CD14-positive monocyte (primary cell): ENCODE measurements at regions of chr3 and their contacts with region 1.

Region 1: GRCh38 chr3:101936419-101937356 is 87.4 kb downstream of the NFKBIZ start:
- DNase-seq: peak; percentile 88 to 96 (median 95)
- H3K4me3 ChIP-seq: peak overlapping the region in 1 of 3 experiments; percentile 59
- H3K4me3 Mint-ChIP-seq: peak overlapping the region; percentile 58 to 67
- H3K27ac ChIP-seq: peak overlapping the region; percentile 84 to 90
- H3K27ac Mint-ChIP-seq: peak overlapping the region in 6 of 7 donors; percentile 97 to 99 (median 98)
- H3K4me1 ChIP-seq: peaks cover 69 to 79% of the 10 kb centered on the region in 2 donors
- H3K4me1 Mint-ChIP-seq: peaks cover 42% of the 10 kb centered on the region
- H3K27me3 ChIP-seq: no peaks in the 10 kb centered on the region
- H3K27me3 Mint-ChIP-seq: peaks cover 0 to 2% (median 1%) of the 10 kb centered on the region in 3 donors
- CTCF ChIP-seq: no peak

Region 2: DNA sequence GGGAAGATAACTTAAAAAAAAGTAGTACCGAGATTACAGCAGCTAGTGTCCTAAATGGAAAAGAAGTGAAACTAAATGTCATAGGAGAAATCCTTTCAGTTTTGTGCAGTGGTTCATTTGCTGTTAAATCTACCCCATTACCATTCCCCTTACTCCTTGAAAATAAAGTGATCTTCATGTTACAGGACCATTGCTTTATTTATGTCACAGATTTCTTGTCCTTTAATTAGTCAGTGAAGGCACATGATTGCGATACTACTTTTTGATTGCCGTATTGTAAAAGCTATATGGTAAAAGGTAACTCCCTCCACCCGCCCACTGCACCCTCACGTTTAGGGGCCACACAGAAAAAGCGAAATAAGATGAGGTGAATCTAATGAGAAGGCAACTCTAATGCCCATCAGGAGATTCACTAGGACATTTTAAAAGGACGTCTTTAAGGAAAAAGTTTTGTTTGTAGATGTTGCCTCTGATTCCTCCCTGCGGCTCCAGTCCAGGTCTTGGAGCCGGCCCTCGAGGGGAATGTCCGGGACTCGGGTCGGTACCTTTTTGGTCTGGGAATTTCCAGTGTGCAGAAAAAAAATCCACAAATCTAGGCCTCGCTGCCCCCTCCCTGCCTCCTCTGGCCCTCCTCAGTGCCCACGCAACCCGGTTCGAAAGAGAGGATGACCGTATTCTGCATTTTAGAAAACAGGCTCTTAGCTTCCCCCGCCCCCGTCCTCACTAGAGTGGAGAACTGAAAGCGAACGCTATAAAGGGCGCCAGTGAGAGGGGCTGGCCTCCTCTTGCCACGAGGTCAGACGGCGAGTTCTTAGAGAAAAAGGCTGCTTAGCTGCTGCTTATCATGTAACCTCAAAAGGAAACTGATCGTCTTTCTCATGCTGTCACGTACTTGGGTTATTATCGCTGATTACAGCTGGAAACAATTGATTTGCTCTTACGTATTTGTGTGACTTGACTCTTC is 109.2 kb before region 1 on chr3:
- intact Hi-C with region 1: loop called in 1 of 2 experiments (anchors 5 kb)
- DNase-seq: peak; percentile 76 to 95 (median 79)
- H3K4me3 ChIP-seq: peak overlapping the region; percentile 76 to 86 (median 80)
- H3K4me3 Mint-ChIP-seq: peak overlapping the region; percentile 94 to 97
- H3K27ac ChIP-seq: peak overlapping the region; percentile 90 to 94
- H3K27ac Mint-ChIP-seq: peak overlapping the region; percentile 94 to 98 (median 97)
- H3K4me1 ChIP-seq: peaks cover 30 to 45% of the 10 kb centered on the region in 2 donors
- H3K4me1 Mint-ChIP-seq: peaks cover 52% of the 10 kb centered on the region
- H3K27me3 ChIP-seq: no peaks in the 10 kb centered on the region
- H3K27me3 Mint-ChIP-seq: peaks cover 0 to 5% (median 0%) of the 10 kb centered on the region in 3 donors
- CTCF ChIP-seq: no peak

Region 3: DNA sequence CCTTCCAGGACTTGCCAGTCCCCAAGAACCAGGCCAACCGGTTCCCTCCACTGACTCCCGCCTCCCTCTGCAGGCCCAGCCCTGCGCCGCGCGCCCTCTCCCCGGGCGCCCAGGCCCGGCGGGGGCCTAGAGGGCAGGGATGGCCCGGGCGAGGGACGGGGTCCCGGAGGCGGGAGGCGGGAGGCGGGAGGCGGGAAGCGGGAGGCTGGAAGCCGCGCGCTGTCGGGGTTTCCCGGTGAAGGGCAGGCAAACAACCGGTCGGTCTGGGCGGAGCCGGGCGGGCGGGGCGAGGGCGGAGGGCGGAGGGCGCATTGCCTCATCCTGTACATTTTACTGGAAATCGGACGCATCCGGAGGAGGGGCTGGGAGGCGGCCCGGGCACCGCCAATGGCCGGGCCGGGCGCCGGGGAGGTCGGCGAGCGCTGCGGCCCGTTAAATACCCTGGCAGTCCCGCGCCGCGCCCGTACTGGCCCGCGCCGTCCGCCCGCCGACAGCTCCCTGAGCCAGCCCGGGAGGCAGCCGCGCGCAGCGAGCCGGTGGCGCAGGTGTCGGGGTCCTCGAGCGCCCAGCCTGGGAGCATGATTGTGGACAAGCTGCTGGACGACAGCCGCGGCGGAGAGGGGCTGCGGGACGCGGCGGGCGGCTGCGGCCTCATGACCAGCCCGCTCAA is 87.5 kb before region 1 on chr3 and contains the start of gene NFKBIZ:
- intact Hi-C with region 1: loop called in 1 of 2 experiments (anchors 5 kb)
- DNase-seq: peak; percentile 92 to 97 (median 95)
- H3K4me3 ChIP-seq: peak within 1 kb of the TSS; percentile 61 to 100 (median 98)
- H3K4me3 Mint-ChIP-seq: peak within 1 kb of the TSS; percentile 96
- H3K27ac ChIP-seq: peak within 1 kb of the TSS; percentile 85 to 96
- H3K27ac Mint-ChIP-seq: peak within 1 kb of the TSS; percentile 94 to 99 (median 98)
- H3K4me1 ChIP-seq: peaks cover 41 to 56% of the 10 kb centered on the region in 2 donors
- H3K4me1 Mint-ChIP-seq: peaks cover 52% of the 10 kb centered on the region
- H3K27me3 ChIP-seq: no peaks in the 10 kb centered on the region
- H3K27me3 Mint-ChIP-seq: no peaks in the 10 kb centered on the region
- CTCF ChIP-seq: no peak
- polyA plus RNA-seq, gene NFKBIZ: 71.0 to 592 (median 84.9) TPM

Region 4: DNA sequence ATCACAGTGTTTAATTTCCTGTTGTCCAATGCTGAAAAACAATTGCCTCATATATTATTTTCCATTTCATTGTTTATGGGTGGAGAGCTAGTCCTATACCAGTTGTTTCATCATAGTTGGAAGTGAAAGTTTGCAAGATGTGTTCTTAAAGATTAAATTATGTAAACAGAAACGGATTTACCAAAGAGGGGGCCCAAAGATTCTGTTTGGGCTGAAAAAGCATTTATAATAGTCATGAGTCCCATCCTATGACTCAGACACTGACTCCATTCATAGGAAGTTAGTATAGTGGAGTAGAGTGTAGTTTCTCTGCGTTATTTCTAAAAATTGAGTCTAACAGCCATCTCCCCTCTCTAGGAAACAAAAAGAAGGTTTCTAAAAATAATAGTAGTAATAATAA is 63.1 kb before region 1 on chr3:
- intact Hi-C with region 1: loop called in 1 of 2 experiments (anchors 10 kb)
- DNase-seq: peak; percentile 79 to 90 (median 88)
- H3K4me3 ChIP-seq: peak overlapping the region in 1 of 3 experiments; percentile 24
- H3K4me3 Mint-ChIP-seq: no peak overlapping the region
- H3K27ac ChIP-seq: peak overlapping the region; percentile 55 to 84
- H3K27ac Mint-ChIP-seq: peak overlapping the region; percentile 83 to 97 (median 91)
- H3K4me1 ChIP-seq: peaks cover 67 to 69% of the 10 kb centered on the region in 2 donors
- H3K4me1 Mint-ChIP-seq: peaks cover 65% of the 10 kb centered on the region
- H3K27me3 ChIP-seq: no peaks in the 10 kb centered on the region
- H3K27me3 Mint-ChIP-seq: no peaks in the 10 kb centered on the region
- CTCF ChIP-seq: no peak

Region 5: GRCh38 chr3:101879623-101880284 is 56.9 kb before region 1 on chr3:
- intact Hi-C with region 1: loop called (anchors 5 to 10 kb)
- DNase-seq: peak in 2 of 3 donors; percentile 53 to 56
- H3K4me3 ChIP-seq: peak overlapping the region in 1 of 3 experiments; percentile 31
- H3K4me3 Mint-ChIP-seq: peak overlapping the region in 1 of 2 donors; percentile 59
- H3K27ac ChIP-seq: peak overlapping the region in 1 of 2 donors; percentile 60
- H3K27ac Mint-ChIP-seq: peak overlapping the region; percentile 60 to 93 (median 85)
- H3K4me1 ChIP-seq: peaks cover 61 to 72% of the 10 kb centered on the region in 2 donors
- H3K4me1 Mint-ChIP-seq: peaks cover 65% of the 10 kb centered on the region
- H3K27me3 ChIP-seq: no peaks in the 10 kb centered on the region
- H3K27me3 Mint-ChIP-seq: no peaks in the 10 kb centered on the region
- CTCF ChIP-seq: no peak

Region 6: GRCh38 chr3:101902041-101902440 is 34.6 kb before region 1 on chr3:
- intact Hi-C with region 1: loop called (anchors 5 kb)
- DNase-seq: peak; percentile 96 to 100 (median 97)
- H3K4me3 ChIP-seq: no peak overlapping the region
- H3K4me3 Mint-ChIP-seq: no peak overlapping the region
- H3K27ac ChIP-seq: peak overlapping the region; percentile 30 to 81
- H3K27ac Mint-ChIP-seq: peak overlapping the region; percentile 84 to 98 (median 90)
- H3K4me1 ChIP-seq: peaks cover 40 to 53% of the 10 kb centered on the region in 2 donors
- H3K4me1 Mint-ChIP-seq: peaks cover 37% of the 10 kb centered on the region
- H3K27me3 ChIP-seq: no peaks in the 10 kb centered on the region
- H3K27me3 Mint-ChIP-seq: no peaks in the 10 kb centered on the region
- CTCF ChIP-seq: no peak

Region 7: DNA sequence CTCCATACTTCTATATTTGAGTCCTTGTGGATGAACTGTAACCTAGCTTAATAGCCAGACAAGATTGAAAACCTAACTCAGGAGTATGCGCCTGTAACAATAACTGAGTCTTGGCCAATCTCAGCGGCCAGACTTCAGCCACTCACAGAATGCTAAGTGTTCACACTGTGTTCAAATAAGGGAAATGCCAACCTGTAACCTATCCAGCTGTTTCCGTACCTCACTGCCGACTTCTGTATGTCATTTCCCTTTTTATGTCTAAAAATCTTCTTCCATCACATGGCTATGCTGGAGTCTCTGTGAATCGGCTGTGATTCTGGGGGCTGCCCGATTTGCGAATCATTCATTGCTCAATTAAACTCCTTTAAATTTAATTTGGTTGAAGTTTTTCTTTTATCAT is 81.9 kb after region 1 on chr3:
- intact Hi-C with region 1: loop called in 1 of 2 experiments (anchors 5 kb)
- DNase-seq: peak; percentile 36 to 88 (median 66)
- H3K4me3 ChIP-seq: no peak overlapping the region
- H3K4me3 Mint-ChIP-seq: no peak overlapping the region
- H3K27ac ChIP-seq: no peak overlapping the region
- H3K27ac Mint-ChIP-seq: peak overlapping the region in 1 of 7 donors; percentile 2
- H3K4me1 ChIP-seq: peaks cover 28 to 30% of the 10 kb centered on the region in 2 donors
- H3K4me1 Mint-ChIP-seq: peaks cover 27% of the 10 kb centered on the region
- H3K27me3 ChIP-seq: no peaks in the 10 kb centered on the region
- H3K27me3 Mint-ChIP-seq: no peaks in the 10 kb centered on the region
- CTCF ChIP-seq: no peak